Left cardiac atrium (tissue), 4 donors: ENCODE measurements at regions of chr18 and their contacts with region 1.

Region 1: GRCh38 chr18:72342933-72343332 is 201.2 kb downstream of the CBLN2 start:
- DNase-seq: no peak
- ATAC-seq: no peak

Region 2: DNA sequence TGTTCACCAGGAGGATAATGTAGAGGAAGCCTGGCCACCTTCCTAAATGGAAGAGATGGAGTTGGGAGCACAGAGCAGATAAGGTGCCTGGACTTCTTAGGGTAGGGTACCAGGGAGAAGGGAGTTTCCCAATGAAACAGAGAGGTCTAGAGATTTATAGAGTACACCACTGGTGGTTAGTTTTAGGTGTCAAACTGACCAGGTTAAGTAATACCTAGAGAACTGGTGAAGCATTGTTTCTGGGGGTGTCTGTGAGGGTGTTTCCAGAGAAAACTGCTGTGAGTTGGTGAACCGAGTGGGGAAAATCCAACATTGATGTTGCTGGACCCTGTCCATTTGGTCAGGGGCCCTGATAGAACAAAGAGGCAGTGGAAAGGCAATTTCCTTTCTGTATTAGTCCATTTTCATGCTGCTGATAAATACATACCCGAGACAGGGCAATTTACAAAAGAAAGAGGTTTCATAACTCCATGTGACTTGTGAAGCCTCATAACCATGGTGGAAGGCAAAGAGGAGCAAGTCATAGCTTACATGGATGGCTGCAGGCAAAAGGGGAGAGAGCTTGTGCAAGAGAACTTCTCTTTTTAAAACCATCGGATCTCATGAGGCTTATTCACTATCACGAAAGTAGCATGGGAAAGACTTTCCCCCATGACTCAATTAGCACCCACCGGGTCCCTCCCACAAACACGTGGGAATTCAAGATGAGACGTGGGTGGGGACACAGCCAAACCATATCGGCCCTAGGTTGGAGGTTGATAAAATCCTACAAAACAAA is 59.6 kb before region 1 on chr18:
- intact Hi-C with region 1: loop called in 1 of 2 experiments (anchors 10 kb)
- DNase-seq: no peak
- ATAC-seq: no peak

Region 3: DNA sequence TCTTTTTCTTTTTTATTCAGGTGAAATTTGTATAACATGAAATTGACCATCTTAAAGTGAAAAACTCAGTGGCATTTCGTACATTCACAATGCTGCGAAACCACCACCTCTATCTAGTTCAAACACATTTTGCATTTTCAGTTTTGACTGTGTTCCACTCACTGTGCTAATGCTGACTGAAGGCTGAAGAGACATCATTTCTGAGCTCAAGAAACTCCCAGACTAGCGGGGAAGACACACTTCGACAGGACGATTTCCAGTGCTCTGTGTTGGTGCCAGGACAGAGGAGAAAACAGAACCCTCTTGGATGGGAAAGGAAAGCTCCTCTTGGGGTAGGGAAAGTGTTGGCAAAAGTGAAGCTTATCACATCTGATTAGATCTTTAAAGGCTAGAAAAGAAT is 245.4 kb after region 1 on chr18:
- intact Hi-C with region 1: no loop called
- DNase-seq: no peak
- ATAC-seq: no peak